ENCODE measurements at regions of chr5 and their contacts with region 1.

Region 1: DNA sequence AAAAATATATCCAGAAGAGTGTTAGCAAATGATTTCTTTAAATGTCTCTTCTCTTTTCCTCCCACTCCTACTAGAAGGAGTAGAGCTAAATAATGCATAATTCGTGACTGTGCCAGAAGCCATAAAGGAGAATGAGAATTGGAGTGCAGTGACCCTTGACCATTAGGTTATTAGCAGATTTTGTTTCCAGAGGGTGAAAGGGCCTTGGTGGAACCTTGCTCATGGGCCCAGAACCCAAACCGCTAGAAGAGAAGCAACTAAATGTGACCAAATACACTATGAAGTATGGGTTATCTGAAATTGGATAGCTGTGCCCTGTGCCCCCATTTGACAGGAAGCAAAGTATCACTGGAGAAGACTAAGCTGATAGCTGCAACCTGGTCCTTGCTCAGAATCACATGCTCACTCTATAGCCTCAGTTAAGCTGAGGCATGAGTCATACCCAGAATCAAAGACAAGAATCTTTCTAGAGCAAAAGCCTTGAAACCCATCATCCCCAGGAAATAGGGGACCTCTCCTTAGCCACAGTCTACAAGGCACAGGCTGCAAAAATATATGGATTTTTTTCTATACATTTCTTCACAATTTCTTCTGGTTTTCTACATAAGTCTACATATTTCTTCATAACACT is 36.3 kb downstream of the CAPSL start:
- DNase-seq: peak; percentile 58
- H3K4me3 Mint-ChIP-seq: no peak overlapping the region
- H3K27ac Mint-ChIP-seq: peak overlapping the region; percentile 34
- H3K4me1 Mint-ChIP-seq: peaks cover 85% of the 10 kb centered on the region
- H3K27me3 Mint-ChIP-seq: no peaks in the 10 kb centered on the region

Region 2: DNA sequence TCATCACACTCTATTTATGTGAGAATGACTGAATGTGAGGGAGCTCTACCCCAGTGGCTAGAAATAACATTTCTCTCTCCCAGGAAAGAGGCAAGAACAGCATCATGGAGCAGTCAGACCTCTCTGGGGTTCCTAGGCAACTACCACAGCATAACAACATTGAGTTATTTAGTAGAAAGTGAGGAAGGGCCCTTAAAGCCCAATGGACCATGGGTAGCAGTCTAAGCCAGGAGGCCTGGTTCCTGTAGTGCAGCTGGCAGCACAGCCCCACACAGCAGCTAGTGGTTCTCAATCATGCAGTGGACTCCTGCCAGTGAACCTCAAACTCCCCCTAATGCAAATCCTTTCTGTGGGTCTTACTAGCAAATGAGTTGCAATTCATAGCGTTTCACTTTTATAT is 229.2 kb before region 1 on chr5:
- CTCF ChIA-PET with region 1: interaction called, 3 read pairs
- intact Hi-C with region 1: loop called (anchors 1 kb)
- DNase-seq: peak; percentile 73
- H3K4me3 Mint-ChIP-seq: no peak overlapping the region
- H3K27ac Mint-ChIP-seq: peak overlapping the region; percentile 75
- H3K4me1 Mint-ChIP-seq: peaks cover 63% of the 10 kb centered on the region
- H3K27me3 Mint-ChIP-seq: no peaks in the 10 kb centered on the region

Region 3: DNA sequence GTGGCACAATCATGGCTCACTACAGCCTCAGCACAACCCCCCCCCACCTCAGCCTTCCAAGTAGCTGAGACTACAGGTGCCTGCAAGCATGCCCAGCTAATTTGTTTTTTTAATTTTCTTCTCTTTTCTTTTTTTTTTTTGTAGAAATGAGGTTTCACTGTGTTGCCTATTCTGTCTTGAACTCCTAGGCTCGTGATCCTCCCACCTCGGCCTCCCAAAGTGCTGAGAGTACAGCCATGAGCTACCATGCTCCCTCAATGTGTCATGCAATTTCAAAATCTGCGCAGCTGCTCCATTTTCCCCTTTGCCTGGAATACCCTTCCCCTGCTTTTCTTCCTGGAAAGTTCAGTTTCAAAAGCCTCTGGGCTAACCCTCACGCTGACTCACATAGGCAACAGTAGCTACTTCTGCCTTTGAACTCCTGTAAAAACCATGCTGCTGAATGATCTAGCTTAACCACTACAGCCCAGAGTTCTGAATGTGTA is 116.5 kb before region 1 on chr5:
- CTCF ChIA-PET with region 1: no interaction called
- intact Hi-C with region 1: loop called (anchors 1 kb)
- DNase-seq: peak; percentile 76
- H3K4me3 Mint-ChIP-seq: peak overlapping the region; percentile 32
- H3K27ac Mint-ChIP-seq: peak overlapping the region; percentile 88
- H3K4me1 Mint-ChIP-seq: peaks cover 79% of the 10 kb centered on the region
- H3K27me3 Mint-ChIP-seq: no peaks in the 10 kb centered on the region

Region 4: GRCh38 chr5:35815089-35815936 is 86.8 kb before region 1 on chr5:
- CTCF ChIA-PET with region 1: no interaction called
- intact Hi-C with region 1: loop called (anchors 1 kb)
- DNase-seq: peak; percentile 76
- H3K4me3 Mint-ChIP-seq: no peak overlapping the region
- H3K27ac Mint-ChIP-seq: no peak overlapping the region
- H3K4me1 Mint-ChIP-seq: peaks cover 45% of the 10 kb centered on the region
- H3K27me3 Mint-ChIP-seq: no peaks in the 10 kb centered on the region

Region 5: DNA sequence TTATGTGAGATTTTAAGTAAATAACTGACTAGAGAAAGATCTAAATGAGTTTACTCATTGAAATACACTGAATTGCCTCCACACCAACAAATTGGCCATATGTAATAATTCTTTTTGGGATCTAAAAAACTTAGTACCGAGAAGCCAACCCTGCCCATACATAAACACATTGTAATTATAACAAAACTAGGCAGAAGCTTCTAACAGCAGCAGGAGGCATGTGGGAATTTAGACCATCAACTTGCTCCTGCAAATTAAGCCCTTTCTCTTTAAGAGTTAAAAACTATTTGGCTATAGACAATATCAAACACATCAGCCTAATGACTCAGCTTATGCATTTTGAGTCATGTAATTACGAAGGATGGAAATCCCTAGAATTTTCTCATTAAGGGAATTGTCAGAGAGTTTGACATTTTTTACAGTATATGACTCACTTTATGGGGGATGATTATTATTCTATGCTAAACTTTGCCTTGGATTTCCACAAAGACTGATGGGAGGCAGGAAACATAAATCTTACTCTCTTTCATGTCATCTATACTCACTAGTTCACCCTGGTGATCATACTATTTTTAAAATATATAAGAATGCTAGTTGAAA is 44.5 kb before region 1 on chr5:
- CTCF ChIA-PET with region 1: interaction called, 13 read pairs
- intact Hi-C with region 1: loop called (anchors 1 kb)
- DNase-seq: no peak
- H3K4me3 Mint-ChIP-seq: peak overlapping the region; percentile 91
- H3K27ac Mint-ChIP-seq: peak overlapping the region; percentile 100
- H3K4me1 Mint-ChIP-seq: peaks cover 57% of the 10 kb centered on the region
- H3K27me3 Mint-ChIP-seq: no peaks in the 10 kb centered on the region

Region 6: DNA sequence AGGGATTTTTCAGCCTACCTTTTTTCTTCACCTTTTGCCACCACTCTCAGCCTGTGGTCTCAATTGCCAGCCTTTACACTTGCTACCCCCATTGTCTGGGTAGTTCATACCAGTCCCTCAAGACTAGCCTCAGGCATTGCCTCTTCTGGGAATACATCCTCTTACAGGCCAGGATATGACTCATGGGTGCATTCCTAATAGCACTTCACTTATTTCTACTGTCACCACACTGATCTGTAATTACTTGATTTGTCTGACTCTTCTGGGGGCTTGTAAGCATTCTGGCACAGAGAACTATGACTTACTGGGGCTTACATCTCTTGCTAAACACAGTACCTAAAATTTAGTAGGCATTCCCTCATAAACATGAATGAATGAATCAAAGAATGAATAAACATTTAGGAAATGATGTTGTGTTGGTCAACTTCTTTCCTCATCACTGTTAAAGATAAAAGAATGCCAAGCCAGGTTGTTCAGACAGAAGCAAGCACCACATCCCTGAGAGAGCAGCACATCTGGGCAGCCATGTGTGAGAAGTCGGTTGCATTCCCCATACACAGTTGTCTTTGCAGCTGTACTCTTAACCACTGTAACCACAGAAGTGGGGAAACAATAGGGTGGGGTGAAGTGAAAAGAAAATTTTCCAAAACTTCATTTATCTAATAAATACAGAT is 17.9 kb before region 1 on chr5:
- CTCF ChIA-PET with region 1: interaction called, 7 read pairs
- intact Hi-C with region 1: loop called (anchors 1 kb)
- DNase-seq: peak; percentile 60
- H3K4me3 Mint-ChIP-seq: peak overlapping the region; percentile 25
- H3K27ac Mint-ChIP-seq: peak overlapping the region; percentile 93
- H3K4me1 Mint-ChIP-seq: peaks cover 49% of the 10 kb centered on the region
- H3K27me3 Mint-ChIP-seq: no peaks in the 10 kb centered on the region

Region 7: GRCh38 chr5:36151434-36152323 is 249.5 kb after region 1 on chr5 and contains the starts of genes LMBRD2 and SKP2:
- CTCF ChIA-PET with region 1: no interaction called
- intact Hi-C with region 1: loop called (anchors 5 kb)
- DNase-seq: peak; percentile 98
- H3K4me3 Mint-ChIP-seq: peak within 1 kb of the TSS; percentile 96
- H3K27ac Mint-ChIP-seq: peak within 1 kb of the TSS; percentile 76
- H3K4me1 Mint-ChIP-seq: peaks cover 67% of the 10 kb centered on the region
- H3K27me3 Mint-ChIP-seq: no peaks in the 10 kb centered on the region
- total RNA-seq, gene LMBRD2: 7.6 to 8.0 TPM
- total RNA-seq, gene SKP2: 44.4 to 48.1 TPM

Measured in activated naive CD4-positive, alpha-beta T cell treated with anti-CD3 and anti-CD28 coated beads for 36 hours (primary cell).